Sciatic nerve (tissue), 2 donors: ENCODE measurements at regions of chr14 and their contacts with region 1.

Region 1: DNA sequence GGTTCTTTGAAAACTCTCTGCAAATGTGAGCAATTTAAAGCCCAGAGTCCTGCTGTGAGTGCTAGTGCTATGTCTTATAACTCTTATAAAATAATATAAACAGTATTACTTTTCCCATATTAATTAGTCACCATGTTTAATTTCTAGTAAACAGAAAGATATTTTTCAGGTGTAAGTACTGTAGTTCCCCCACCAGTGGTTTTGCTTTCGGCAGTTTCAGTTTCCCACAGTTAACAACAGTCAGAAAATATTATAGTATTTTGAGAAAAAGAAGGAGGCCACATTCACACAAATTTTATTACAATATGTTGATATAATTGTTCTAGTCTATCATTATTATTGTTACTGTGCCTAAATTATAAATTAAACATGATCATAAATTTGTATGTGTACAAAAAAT is 800.5 kb downstream of the LRFN5 start:
- DNase-seq: no peak
- ATAC-seq: no peak

Region 2: DNA sequence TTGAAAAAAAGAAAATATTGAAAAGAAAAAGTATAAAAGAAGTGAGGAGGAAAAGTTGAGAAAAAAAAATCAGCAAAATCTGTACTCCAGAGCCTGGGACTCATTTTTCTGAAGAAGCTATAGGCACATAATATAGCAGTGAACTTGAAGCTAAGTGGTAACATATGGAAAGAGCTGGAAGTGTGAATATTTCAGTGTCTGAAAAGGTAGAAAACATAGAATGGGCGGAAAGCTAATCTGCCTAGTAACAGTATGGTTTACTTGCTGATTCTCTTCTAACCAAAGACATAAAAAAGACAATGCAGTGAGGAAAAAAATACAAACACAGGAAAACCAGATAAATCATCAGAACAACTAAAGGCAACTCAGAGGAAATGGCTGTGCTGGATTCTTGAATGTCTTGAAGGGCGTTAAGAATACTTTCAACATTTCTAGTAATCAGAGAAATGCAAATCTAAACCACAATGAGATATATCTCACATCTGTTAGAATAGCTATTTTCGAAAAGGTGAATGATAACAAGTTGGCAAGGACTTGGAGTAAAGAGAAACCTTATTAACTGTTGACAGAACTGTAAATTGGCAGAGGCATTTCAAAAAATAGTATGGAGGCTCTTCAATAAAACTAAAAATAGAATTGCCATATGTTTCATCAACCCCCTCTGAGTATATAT is 15.9 kb before region 1 on chr14:
- intact Hi-C with region 1: loop called (anchors 1 kb)
- DNase-seq: no peak
- ATAC-seq: no peak